Dorsolateral prefrontal cortex (tissue), 120 donors: ENCODE measurements at regions of chr2 and their contacts with region 1.

Region 1: DNA sequence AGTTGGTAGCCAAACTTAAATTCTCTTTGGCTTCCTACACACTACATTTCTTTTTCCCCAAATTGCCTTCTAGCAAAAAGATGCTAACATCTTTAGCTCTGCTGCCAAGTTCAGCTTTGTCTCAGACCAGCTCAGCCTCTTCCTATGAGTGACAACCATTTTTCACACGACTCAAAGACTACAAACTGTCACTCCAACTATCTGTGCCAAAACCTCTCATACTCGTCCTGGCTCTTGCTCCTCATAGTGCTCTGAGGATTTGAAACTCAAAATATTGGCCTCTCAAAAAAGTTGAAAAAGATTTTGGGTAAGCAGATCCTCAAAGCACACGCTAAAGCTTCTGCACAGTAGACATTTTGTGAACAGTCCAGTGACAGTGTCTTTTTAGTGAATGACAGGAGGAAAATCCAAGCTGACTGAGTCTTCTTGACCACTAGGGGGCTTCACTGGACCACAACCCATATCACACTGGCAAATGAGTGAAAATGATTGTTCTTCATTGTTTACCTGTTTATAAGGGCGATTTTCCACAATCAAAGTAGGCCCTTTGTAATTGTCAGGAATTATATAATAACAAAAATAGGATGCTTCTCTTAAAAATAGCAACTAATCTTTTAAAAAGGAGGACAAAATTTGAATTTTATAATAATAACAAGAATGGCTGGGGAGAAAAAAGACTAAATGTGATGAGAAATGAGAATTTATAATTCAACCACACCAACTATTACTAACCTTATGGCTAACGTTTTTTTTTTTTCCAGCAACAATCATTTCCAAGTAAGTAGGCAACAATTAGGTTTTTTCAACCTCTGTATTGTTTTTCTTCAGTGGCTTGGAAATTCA is 85.5 kb upstream of the PGAP1 start:
- DNase-seq: peak in 4 of 10 donors; percentile 31 to 50 (median 41)
- H3K4me3 ChIP-seq: peak overlapping the region in 5 of 59 donors; percentile 2 to 41 (median 9)
- H3K27ac ChIP-seq: peak overlapping the region in 51 of 59 donors; percentile 1 to 82 (median 64)
- H3K27me3 ChIP-seq: no peaks in the 10 kb centered on the region
- CTCF ChIP-seq: peak; percentile 61 to 97 (median 90)

Region 2: GRCh38 chr2:196849895-196850294 is 162.1 kb before region 1 on chr2:
- intact Hi-C with region 1: loop called (anchors 5 kb)
- DNase-seq: peak in 2 of 10 donors; percentile 10 to 32
- H3K4me3 ChIP-seq: no peak overlapping the region
- H3K27ac ChIP-seq: peak overlapping the region in 1 of 59 donors; percentile 39
- H3K27me3 ChIP-seq: no peaks in the 10 kb centered on the region
- CTCF ChIP-seq: peak in 51 of 56 donors; percentile 18 to 74 (median 48)

Region 3: DNA sequence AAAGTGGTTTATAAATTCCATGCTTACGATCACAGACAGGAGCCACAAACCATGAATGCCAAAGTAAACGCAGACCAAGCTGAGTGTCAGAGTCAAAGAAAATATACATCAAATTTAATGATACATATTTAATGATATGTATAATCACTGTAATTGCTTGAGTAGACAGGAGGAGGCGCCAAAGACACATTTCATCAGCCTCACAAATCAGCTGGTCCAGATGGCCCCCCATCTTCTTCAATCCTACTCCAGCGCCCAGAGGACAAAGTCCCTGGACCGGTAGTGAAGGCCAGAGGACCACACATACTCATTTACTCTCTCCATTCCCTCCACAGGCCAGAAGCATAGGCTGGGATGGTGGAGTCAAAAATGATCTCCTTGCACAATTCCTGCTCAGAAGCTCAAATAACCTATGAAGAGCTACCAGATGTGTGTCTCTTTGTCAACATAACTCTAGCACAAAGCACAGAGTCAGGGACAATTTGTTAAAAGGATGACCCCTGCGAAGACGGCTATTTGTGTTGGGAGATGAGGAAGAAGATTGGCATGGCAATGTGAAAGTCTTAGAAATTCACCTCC is 63.8 kb after region 1 on chr2:
- intact Hi-C with region 1: loop called (anchors 5 kb)
- DNase-seq: no peak
- H3K4me3 ChIP-seq: no peak overlapping the region
- H3K27ac ChIP-seq: peak overlapping the region in 54 of 59 donors; percentile 13 to 97 (median 92)
- H3K27me3 ChIP-seq: no peaks in the 10 kb centered on the region
- CTCF ChIP-seq: peak in 24 of 56 donors; percentile 10 to 39 (median 18)

Region 4: DNA sequence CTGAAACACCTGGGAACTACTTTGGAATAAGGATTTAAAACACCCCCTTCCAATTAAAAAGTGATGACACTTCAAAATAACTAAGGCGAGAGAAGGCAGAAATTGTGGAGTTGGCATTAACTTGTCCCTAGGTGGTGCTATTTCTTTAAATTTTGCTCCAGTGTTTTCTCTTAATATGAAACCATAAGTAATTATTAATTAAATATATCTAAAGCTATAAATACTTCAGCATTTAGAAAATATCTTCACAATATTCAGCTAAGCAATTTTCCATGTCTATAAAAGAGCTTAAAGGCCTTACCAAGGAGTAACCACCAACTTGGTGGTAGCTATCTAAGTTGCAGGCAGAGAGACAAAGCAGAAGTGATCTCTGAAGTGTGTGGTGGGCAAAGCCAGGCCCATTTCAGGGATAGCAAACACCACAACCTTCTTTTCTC is 101.3 kb after region 1 on chr2:
- intact Hi-C with region 1: loop called (anchors 5 kb)
- DNase-seq: no peak
- H3K4me3 ChIP-seq: no peak overlapping the region
- H3K27ac ChIP-seq: peak overlapping the region in 30 of 59 donors; percentile 0 to 74 (median 26)
- H3K27me3 ChIP-seq: no peaks in the 10 kb centered on the region
- CTCF ChIP-seq: peak; percentile 58 to 91 (median 77)

Region 5: DNA sequence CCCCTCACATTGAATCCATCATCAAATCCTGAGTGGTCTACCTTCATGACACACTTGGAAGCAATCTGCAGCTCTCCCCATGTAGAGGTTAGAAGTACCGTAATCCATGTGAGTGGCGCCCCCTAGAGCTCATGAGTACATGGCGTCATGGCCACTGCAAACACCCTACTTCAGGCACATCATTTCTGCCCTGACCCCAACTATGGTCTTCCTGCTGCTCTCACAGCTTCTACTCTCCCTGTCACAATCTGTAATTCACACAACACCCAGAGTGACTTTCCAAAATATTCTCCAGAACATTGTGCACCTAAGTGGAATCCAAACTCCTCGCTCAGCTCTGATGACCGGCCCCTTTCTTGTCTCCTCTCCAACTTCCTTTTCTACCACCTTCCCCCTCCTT is 156.7 kb after region 1 on chr2:
- intact Hi-C with region 1: loop called (anchors 2 to 10 kb)
- DNase-seq: peak in 9 of 10 donors; percentile 25 to 84 (median 71)
- H3K4me3 ChIP-seq: peak overlapping the region in 6 of 59 donors; percentile 2 to 31 (median 17)
- H3K27ac ChIP-seq: peak overlapping the region in 27 of 59 donors; percentile 0 to 75 (median 38)
- H3K27me3 ChIP-seq: no peaks in the 10 kb centered on the region
- CTCF ChIP-seq: peak; percentile 47 to 83 (median 69)

Region 6: DNA sequence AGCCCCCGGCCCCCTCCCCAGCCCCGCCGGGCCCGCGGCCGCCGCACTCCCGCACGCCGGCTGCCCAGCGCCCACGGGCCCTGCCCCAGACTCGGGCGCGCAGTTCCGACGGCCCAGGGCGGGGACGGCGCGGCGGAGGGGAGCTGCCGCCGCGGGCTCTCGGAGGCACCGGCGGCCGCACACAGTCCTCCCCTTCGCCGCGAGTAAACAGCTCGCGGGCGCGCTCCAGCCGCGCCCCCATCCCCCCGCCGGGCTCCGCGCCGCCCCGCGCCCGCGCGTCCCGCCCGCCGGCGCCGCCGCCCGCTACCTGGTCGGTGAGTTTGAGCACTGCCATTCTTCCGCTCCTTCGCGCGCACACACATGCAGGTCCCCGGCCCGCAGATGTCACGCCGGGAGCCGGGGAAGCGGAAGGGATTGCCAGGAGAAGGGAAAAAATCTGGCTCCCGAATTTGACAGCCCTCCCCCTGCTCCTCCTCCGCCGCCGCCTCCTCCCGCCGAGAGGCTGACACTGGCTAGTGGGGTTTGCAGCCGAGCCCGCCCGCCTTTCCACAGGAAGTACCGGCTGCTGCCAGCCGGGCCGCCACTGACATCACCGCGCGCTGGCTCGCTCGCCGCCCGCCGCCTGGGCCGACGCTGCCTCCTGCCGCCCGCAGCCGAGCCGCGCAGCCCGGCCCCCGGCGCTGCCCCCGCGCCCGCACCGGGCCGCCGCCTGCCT is 298.4 kb after region 1 on chr2 and contains the start of gene ANKRD44:
- intact Hi-C with region 1: loop called (anchors 2 to 10 kb)
- DNase-seq: peak; percentile 79 to 94 (median 90)
- H3K4me3 ChIP-seq: peak within 1 kb of the TSS; percentile 59 to 92 (median 78)
- H3K27ac ChIP-seq: peak within 1 kb of the TSS; percentile 57 to 95 (median 87)
- H3K27me3 ChIP-seq: no peaks in the 10 kb centered on the region
- CTCF ChIP-seq: peak in 49 of 56 donors; percentile 23 to 69 (median 51)
- total RNA-seq, gene ANKRD44: 20.2 to 68.1 (median 34.7) TPM